Naive thymus-derived CD8-positive, alpha-beta T cell (primary cell): ENCODE measurements at regions of chr10 and their contacts with region 1.

Region 1: DNA sequence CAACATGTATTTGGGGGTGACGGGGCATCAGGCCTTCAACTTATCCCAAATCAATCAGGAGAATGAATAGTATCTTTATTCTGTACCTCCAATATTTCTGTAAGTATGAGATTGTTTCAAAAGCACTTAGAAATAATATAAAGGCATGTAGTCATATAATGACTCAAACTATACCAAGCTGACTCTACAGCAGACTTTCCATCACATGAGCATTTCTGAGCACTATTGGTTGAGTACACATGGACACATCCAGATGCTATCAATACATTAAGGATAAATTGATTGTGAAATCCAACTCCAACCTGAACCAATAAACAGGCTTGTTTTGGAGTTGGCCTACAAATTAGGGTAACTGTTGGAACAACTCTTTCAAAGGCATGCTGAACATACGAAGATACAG is 229.4 kb downstream of the SFMBT2 start:
- DNase-seq: no peak
- ATAC-seq: no peak
- H3K4me3 Mint-ChIP-seq: no peak overlapping the region
- H3K27ac Mint-ChIP-seq: no peak overlapping the region
- H3K4me1 Mint-ChIP-seq: peaks cover 12 to 37% (median 29%) of the 10 kb centered on the region in 4 donors
- H3K27me3 Mint-ChIP-seq: no peaks in the 10 kb centered on the region

Region 2: DNA sequence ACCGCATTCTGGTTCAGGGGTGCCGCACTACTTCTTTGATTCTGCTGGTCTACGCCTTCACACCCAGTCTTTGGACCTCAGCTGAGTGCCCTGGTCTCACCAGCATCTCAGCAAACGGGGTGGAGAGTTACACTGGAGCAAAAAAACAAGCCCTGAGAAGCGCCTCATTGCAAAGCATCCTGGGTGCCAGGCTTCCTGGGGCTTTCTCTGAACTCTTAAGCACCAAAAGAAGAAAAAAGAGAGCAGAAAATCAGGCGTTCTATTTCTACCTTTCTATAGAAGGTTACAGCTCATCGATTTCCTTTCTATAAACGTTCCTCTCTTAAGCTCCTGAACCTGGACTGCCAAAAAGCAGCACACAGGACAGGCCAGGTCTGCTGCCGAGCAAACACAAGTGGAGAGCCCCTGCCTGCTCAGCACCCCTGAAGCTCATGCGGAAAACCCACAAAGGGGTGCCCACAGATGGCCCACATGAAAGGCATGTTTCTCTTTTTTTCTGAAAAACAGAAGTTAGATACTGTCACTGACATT is 11.5 kb after region 1 on chr10:
- POLR2A ChIA-PET with region 1: interaction called, 10 read pairs
- DNase-seq: peak; percentile 50 to 90 (median 82)
- ATAC-seq: peak; percentile 93 to 94
- H3K4me3 Mint-ChIP-seq: peak overlapping the region; percentile 73 to 90 (median 86)
- H3K27ac Mint-ChIP-seq: peak overlapping the region; percentile 92 to 99 (median 96)
- H3K4me1 Mint-ChIP-seq: peaks cover 44 to 86% (median 77%) of the 10 kb centered on the region in 4 donors
- H3K27me3 Mint-ChIP-seq: no peaks in the 10 kb centered on the region